Activated CD8-positive, alpha-beta memory T cell treated with anti-CD3 and anti-CD28 coated beads, Interleukin-2, amount 10 ng/mL, durations not matched to agents 7 days and 5 days (primary cell): ENCODE measurements at regions of chr11 and their contacts with region 1.

Region 1: DNA sequence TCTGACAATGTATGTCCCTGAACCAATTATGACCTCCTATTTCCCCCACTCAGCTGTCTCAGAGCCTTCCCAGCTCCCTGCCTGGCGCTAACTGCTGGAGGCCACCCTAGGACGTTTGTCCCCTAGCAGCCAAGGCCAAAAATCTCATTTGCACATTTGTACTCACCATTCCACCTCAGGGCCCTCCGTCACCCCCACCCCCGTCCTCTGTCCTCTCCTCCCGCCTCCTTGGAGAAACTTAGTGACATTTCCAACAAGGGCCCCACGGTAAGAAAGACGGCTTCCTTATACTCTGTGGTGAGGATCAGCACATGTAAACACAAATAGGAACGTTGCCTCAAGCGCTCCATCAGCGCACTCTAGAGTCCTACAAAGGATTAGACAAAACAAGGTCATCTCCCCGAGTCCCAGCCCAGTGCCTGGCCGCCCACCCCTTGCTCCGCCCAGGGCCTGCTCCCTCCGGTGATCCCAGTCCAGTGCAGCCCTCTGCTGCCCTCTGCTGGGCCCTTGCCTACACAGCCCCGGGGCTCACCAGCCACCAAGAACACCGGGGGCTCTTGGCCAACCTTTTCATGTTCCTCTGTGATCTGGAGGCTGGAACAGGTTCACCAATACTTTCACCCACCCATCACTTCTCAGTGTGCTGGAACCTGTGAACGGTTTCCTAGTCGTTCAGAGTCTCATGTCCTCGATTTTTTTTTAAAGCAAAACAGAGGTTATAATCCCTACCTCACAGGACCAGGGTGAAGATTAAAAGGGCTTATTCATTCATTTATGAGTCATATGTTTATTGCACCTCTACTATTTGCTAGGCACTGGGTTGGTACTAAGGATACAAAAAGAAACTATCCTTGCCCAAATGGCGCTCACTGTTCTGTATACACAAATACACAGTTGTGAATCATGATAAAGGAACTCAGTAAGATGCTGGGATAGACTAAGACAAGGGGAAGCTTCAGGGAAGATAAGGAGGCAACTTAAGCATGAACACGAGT is 15.3 kb upstream of the CTR9 start:
- DNase-seq: peak; percentile 92
- ATAC-seq: peak; percentile 100
- H3K4me3 Mint-ChIP-seq: peak overlapping the region; percentile 20
- H3K27ac Mint-ChIP-seq: no peak overlapping the region
- H3K4me1 Mint-ChIP-seq: peaks cover 9% of the 10 kb centered on the region
- H3K27me3 Mint-ChIP-seq: peaks cover 7% of the 10 kb centered on the region

Region 2: GRCh38 chr11:10400856-10401255 is 334.9 kb before region 1 on chr11:
- CTCF ChIA-PET with region 1: interaction called, 21 read pairs
- DNase-seq: no peak
- ATAC-seq: no peak
- H3K4me3 Mint-ChIP-seq: no peak overlapping the region
- H3K27ac Mint-ChIP-seq: no peak overlapping the region
- H3K4me1 Mint-ChIP-seq: peaks cover 10% of the 10 kb centered on the region
- H3K27me3 Mint-ChIP-seq: peaks cover 6% of the 10 kb centered on the region

Region 3: GRCh38 chr11:10405855-10406592 is 329.8 kb before region 1 on chr11:
- CTCF ChIA-PET with region 1: interaction called, 21 read pairs
- DNase-seq: peak; percentile 58
- ATAC-seq: peak; percentile 77
- H3K4me3 Mint-ChIP-seq: no peak overlapping the region
- H3K27ac Mint-ChIP-seq: no peak overlapping the region
- H3K4me1 Mint-ChIP-seq: peaks cover 16% of the 10 kb centered on the region
- H3K27me3 Mint-ChIP-seq: no peaks in the 10 kb centered on the region